ENCODE measurements at regions of chr19 and their contacts with region 1.

Region 1: DNA sequence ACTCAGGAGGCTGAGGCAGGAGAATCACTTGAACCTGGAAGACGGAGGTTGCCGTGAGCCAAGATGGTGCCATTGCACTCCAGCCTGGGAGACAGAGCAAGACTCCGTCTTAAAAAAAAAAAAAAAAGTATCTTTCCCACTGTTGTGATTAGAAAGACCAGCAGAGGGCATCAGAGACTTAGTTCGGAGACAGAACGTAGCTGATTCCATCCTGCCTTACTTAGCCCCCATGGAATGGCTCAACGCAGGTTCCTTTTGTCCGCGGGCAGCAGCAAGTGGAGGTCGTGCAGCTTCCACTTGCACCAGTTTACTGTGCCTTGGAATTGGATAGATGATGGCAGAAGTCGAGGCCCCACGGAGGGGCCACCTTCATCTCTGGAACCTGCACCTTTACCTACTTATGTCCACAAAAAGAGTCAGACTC is 8.1 kb downstream of the TIMM29 start:
- DNase-seq: peak; percentile 56
- ATAC-seq: peak; percentile 92
- H3K4me3 Mint-ChIP-seq: no peak overlapping the region
- H3K27ac Mint-ChIP-seq: no peak overlapping the region
- H3K4me1 Mint-ChIP-seq: peaks cover 6% of the 10 kb centered on the region
- H3K27me3 Mint-ChIP-seq: no peaks in the 10 kb centered on the region
- CTCF ChIP-seq: peak; percentile 69

Region 2: GRCh38 chr19:10780368-10780767 is 156.3 kb before region 1 on chr19:
- CTCF ChIA-PET with region 1: no interaction called
- POLR2A ChIA-PET with region 1: no interaction called
- intact Hi-C with region 1: no loop called
- DNase-seq: no peak
- ATAC-seq: no peak
- H3K4me3 Mint-ChIP-seq: no peak overlapping the region
- H3K27ac Mint-ChIP-seq: peak overlapping the region; percentile 38
- H3K4me1 Mint-ChIP-seq: peaks cover 5% of the 10 kb centered on the region
- H3K27me3 Mint-ChIP-seq: no peaks in the 10 kb centered on the region
- CTCF ChIP-seq: no peak

Region 3: GRCh38 chr19:10884274-10884673 is 52.4 kb before region 1 on chr19:
- CTCF ChIA-PET with region 1: no interaction called
- POLR2A ChIA-PET with region 1: no interaction called
- intact Hi-C with region 1: no loop called
- DNase-seq: no peak
- ATAC-seq: no peak
- H3K4me3 Mint-ChIP-seq: no peak overlapping the region
- H3K27ac Mint-ChIP-seq: no peak overlapping the region
- H3K4me1 Mint-ChIP-seq: peaks cover 16% of the 10 kb centered on the region
- H3K27me3 Mint-ChIP-seq: no peaks in the 10 kb centered on the region
- CTCF ChIP-seq: no peak

Region 4: GRCh38 chr19:10946964-10947657 is 10.4 kb after region 1 on chr19:
- CTCF ChIA-PET with region 1: interaction called, 32 read pairs
- POLR2A ChIA-PET with region 1: interaction called, 4 read pairs
- intact Hi-C with region 1: no loop called
- DNase-seq: no peak
- ATAC-seq: no peak
- H3K4me3 Mint-ChIP-seq: no peak overlapping the region
- H3K27ac Mint-ChIP-seq: no peak overlapping the region
- H3K4me1 Mint-ChIP-seq: peaks cover 4% of the 10 kb centered on the region
- H3K27me3 Mint-ChIP-seq: no peaks in the 10 kb centered on the region
- CTCF ChIP-seq: no peak

Region 5: DNA sequence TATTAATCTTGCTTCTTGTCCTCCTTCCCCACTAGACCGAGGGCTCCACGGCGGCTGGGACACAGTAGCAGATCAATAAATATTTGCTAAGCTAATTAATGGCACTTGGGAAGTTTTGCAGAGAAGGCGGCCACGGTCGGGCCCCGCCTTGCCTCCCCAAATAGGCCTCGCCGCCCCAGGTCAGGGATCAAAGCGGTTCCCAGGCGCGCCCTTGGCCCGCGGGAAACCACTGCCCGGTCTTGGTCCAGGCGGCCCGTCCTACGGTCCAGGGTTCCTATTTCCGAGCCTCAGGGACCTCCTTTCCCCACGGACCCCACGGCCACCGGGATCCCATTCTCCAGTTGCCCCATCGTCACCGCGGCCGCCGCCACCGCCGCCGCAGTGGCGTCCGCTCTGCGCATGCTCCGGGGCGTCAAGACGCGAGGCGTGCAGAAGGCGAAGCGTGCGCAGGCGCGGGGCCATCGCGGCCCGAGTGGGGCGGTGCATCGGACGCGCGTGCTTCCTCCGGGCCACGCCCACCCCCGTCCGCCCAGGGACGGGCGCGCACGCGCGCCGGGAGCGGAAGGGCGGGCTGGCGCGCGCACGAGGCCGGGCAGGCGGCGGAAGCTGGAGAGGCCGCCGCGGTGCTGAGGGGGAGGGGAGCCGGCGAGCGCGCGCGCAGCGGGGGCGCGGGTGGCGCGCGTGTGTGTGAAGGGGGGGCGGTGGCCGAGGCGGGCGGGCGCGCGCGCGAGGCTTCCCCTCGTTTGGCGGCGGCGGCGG is 23.8 kb after region 1 on chr19 and contains the start of gene SMARCA4:
- CTCF ChIA-PET with region 1: interaction called, 25 read pairs
- POLR2A ChIA-PET with region 1: interaction called, 6 read pairs
- intact Hi-C with region 1: no loop called
- DNase-seq: peak; percentile 97
- ATAC-seq: peak; percentile 82
- H3K4me3 Mint-ChIP-seq: peak within 1 kb of the TSS; percentile 89
- H3K27ac Mint-ChIP-seq: peak within 1 kb of the TSS; percentile 91
- H3K4me1 Mint-ChIP-seq: peaks cover 34% of the 10 kb centered on the region
- H3K27me3 Mint-ChIP-seq: no peaks in the 10 kb centered on the region
- CTCF ChIP-seq: no peak
- total RNA-seq, gene SMARCA4: 97.0 to 98.7 TPM

Region 6: GRCh38 chr19:11005521-11005920 is 68.8 kb after region 1 on chr19:
- CTCF ChIA-PET with region 1: interaction called, 12 read pairs
- POLR2A ChIA-PET with region 1: no interaction called
- intact Hi-C with region 1: loop called (anchors 10 kb)
- DNase-seq: no peak
- ATAC-seq: no peak
- H3K4me3 Mint-ChIP-seq: no peak overlapping the region
- H3K27ac Mint-ChIP-seq: no peak overlapping the region
- H3K4me1 Mint-ChIP-seq: no peaks in the 10 kb centered on the region
- H3K27me3 Mint-ChIP-seq: no peaks in the 10 kb centered on the region
- CTCF ChIP-seq: no peak

Region 7: DNA sequence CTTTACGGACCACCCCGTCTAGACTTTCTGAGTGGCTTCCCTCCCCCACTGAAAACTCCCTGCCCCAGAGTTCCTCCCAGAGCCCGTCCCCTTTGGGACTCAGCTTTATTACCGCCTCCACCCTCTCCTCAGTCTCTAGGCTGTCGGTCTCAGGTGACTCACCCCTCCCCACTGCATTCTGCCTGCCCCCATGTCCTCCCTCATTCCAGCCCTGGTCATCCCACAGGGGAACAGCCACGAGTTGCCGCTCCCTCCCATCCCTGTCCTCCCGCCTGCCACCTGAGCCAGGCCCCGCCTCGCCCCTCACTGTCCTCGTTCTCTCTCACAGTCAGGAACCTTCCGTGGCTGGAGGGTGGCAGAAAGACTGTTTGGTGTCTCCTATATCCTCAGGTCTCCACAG is 81.5 kb after region 1 on chr19:
- CTCF ChIA-PET with region 1: interaction called, 4 read pairs
- POLR2A ChIA-PET with region 1: no interaction called
- intact Hi-C with region 1: loop called (anchors 10 kb)
- DNase-seq: no peak
- ATAC-seq: no peak
- H3K4me3 Mint-ChIP-seq: no peak overlapping the region
- H3K27ac Mint-ChIP-seq: no peak overlapping the region
- H3K4me1 Mint-ChIP-seq: no peaks in the 10 kb centered on the region
- H3K27me3 Mint-ChIP-seq: no peaks in the 10 kb centered on the region
- CTCF ChIP-seq: no peak

Region 8: GRCh38 chr19:11064831-11065303 is 128.2 kb after region 1 on chr19:
- CTCF ChIA-PET with region 1: no interaction called
- POLR2A ChIA-PET with region 1: no interaction called
- intact Hi-C with region 1: no loop called
- DNase-seq: no peak
- ATAC-seq: no peak
- H3K4me3 Mint-ChIP-seq: no peak overlapping the region
- H3K27ac Mint-ChIP-seq: no peak overlapping the region
- H3K4me1 Mint-ChIP-seq: no peaks in the 10 kb centered on the region
- H3K27me3 Mint-ChIP-seq: no peaks in the 10 kb centered on the region
- CTCF ChIP-seq: no peak